HCT116 (cell line): ENCODE measurements at regions of chr9 and their contacts with region 1.

Region 1: GRCh38 chr9:112705768-112706427 is 12.0 kb downstream of the INIP start:
- DNase-seq: no peak
- ATAC-seq: peak; percentile 78
- H3K4me3 ChIP-seq: no peak overlapping the region
- H3K27ac ChIP-seq: no peak overlapping the region
- H3K4me1 ChIP-seq: no peaks in the 10 kb centered on the region
- H3K27me3 ChIP-seq: no peaks in the 10 kb centered on the region
- CTCF ChIP-seq: peak in 2 of 3 experiments; percentile 19 to 34; a peak in 4 of 6 replicates
- POLR2A ChIP-seq: no peak
- RAD21 ChIP-seq: peak; percentile 30; the same call in 1 of the 2 replicates

Region 2: DNA sequence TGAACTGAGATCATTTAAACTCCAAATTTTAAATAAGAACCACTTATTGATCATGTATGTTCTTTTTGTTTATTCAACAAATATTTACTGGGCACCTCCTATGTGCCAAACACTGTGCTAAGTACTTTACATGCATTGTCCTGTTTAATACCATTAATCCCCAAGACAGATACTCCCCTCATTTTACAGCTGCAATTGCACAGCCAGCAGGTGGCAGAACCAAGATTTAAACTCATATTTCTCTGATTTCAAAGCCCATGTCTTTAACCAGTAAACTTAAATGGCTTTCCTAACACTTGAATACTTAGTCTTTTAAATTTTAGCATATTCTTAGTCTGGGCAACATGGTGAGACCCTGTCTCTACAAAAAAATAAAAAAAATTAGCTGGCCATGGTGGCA is 262.7 kb before region 1 on chr9:
- CTCF ChIA-PET with region 1: no interaction called
- POLR2A ChIA-PET with region 1: interaction called, 3 read pairs
- RAD21 ChIA-PET with region 1: no interaction called
- intact Hi-C with region 1: loop called (anchors 5 kb)
- DNase-seq: no peak
- ATAC-seq: 0 out of 2 replicates have a peak, but pooled peaks have one; percentile 55
- H3K4me3 ChIP-seq: no peak overlapping the region
- H3K27ac ChIP-seq: no peak overlapping the region
- H3K4me1 ChIP-seq: no peaks in the 10 kb centered on the region
- H3K27me3 ChIP-seq: no peaks in the 10 kb centered on the region
- CTCF ChIP-seq: peak; percentile 43 to 67 (median 55); a peak in 5 of 6 replicates
- POLR2A ChIP-seq: no peak
- RAD21 ChIP-seq: peak; percentile 48